ENCODE measurements at regions of chr18 and their contacts with region 1.

Region 1: DNA sequence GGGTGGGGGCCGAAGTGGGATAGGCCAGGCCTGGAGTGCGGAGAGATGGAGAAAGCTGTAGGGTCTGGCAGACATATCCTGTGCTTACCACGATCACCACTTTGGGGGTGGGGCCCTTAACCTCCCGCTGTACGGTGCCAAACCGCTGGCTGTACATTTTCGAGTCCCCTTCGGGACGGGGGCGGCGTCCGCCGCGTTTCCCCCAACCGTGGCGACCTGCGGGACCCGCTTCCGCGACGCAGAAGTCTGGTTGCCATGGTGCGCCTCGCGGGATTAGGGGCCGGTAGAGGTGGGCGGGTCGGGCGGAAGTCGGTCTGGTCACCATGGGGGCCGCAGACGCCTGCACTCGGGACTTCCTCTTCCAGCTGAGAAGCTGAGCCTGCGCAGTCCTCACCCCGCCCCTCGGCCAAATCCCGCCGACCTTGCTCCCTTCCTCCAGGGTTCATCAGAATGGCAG is at the start of gene CFAP53:
- DNase-seq: peak; percentile 94
- ATAC-seq: peak; percentile 86
- H3K4me3 Mint-ChIP-seq: peak within 1 kb of the TSS; percentile 76
- H3K27ac Mint-ChIP-seq: peak within 1 kb of the TSS; percentile 76
- H3K4me1 Mint-ChIP-seq: peaks cover 34% of the 10 kb centered on the region
- H3K27me3 Mint-ChIP-seq: no peaks in the 10 kb centered on the region
- total RNA-seq, gene CFAP53: 0.21 to 0.29 TPM

Region 2: DNA sequence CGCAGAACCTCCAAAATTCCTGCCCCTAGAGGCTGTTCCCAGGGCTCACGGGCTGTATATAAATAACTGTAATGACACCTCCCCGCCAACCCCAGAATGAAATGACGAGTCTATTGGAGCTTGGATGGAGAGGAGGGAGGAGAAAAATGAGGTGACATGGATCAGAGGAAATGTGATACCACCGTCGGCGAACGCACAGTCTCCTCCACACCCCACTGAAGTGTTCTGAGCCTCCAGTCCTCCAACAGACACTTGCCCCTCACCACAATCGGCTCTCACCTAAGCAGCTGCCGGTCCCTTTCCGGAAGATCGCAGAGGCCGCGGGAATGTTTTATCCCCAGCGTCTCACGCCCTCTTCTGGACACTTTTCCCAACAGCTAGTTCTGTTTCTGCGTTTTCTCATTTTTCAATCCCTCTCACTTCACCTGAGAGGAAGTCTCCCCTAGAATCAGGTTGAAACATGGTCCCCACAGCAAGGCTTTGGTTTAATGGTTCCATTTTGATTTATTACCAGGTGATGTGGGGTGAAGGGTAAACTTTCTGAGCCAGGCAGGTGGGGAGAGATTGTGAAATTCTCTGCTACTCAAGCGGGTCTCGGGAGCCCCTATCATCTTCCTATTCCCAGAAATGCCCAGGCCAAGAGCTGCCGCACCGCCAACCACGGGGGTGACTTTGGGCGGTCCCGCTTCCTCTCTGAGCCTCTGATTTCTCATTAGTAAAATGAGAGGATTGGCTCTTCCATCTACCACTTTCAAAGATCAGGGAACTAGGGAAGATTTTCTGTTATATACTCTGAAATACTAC is 62.3 kb before region 1 on chr18:
- CTCF ChIA-PET with region 1: no interaction called
- POLR2A ChIA-PET with region 1: no interaction called
- DNase-seq: peak; percentile 32
- ATAC-seq: no peak
- H3K4me3 Mint-ChIP-seq: no peak overlapping the region
- H3K27ac Mint-ChIP-seq: no peak overlapping the region
- H3K4me1 Mint-ChIP-seq: peaks cover 9% of the 10 kb centered on the region
- H3K27me3 Mint-ChIP-seq: peaks cover 58% of the 10 kb centered on the region

Region 3: DNA sequence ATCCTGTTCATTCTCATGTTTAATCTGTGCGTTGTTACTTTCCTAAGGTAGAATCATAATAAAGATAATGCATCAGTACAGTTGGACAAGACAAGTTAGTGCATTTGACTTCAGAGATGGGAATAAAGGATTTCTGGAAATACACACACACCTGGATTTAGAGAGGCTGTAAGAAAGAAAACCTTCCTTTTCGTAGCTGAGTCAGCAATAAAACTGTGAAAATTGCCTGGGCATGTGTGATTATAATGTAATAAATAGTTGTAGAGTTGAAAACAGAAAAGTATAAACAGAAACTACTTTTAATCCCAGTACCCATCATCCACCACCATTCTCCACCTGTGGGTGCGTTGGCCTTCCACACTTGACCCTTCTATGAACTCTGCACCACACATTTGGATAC is 15.3 kb before region 1 on chr18:
- CTCF ChIA-PET with region 1: no interaction called
- POLR2A ChIA-PET with region 1: no interaction called
- DNase-seq: no peak
- ATAC-seq: no peak
- H3K4me3 Mint-ChIP-seq: no peak overlapping the region
- H3K27ac Mint-ChIP-seq: no peak overlapping the region
- H3K4me1 Mint-ChIP-seq: peaks cover 3% of the 10 kb centered on the region
- H3K27me3 Mint-ChIP-seq: no peaks in the 10 kb centered on the region

Region 4: GRCh38 chr18:50281295-50281971 is 15.2 kb after region 1 on chr18 and contains the start of gene MBD1:
- CTCF ChIA-PET with region 1: interaction called, 50 read pairs
- POLR2A ChIA-PET with region 1: interaction called, 11 read pairs
- DNase-seq: peak; percentile 97
- ATAC-seq: peak; percentile 95
- H3K4me3 Mint-ChIP-seq: peak within 1 kb of the TSS; percentile 96
- H3K27ac Mint-ChIP-seq: peak within 1 kb of the TSS; percentile 94
- H3K4me1 Mint-ChIP-seq: peaks cover 64% of the 10 kb centered on the region
- H3K27me3 Mint-ChIP-seq: no peaks in the 10 kb centered on the region
- total RNA-seq, gene MBD1: 97.3 to 101 TPM

Region 5: DNA sequence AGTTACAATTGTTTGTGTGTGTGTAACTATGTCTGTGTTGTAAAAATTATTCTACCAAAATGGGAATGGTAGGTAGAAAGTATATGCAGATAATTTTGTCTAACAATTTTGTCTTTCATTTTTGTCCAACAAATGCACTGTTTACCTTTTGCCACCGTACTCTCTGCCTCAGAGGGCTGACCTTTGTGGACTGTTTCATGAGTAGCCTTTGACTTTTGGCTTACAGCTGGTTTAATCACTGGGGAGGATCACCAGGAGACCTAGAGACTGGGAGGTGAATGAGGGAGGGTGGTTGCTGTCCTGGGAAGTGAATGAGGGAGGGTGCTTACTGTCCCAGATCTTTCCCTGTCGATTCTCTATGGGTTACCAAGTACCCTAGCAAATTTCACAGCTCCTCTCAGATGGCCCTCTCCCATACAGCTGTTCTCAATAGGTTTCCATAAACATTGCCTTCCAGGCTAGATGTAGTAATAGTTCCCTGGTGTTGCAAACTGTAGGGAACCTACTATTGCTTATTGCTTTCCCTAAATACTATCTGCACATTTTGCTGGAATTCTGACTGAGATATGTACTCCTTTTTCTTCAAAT is 47.7 kb after region 1 on chr18:
- CTCF ChIA-PET with region 1: no interaction called
- POLR2A ChIA-PET with region 1: no interaction called
- DNase-seq: no peak
- ATAC-seq: no peak
- H3K4me3 Mint-ChIP-seq: no peak overlapping the region
- H3K27ac Mint-ChIP-seq: no peak overlapping the region
- H3K4me1 Mint-ChIP-seq: peaks cover 8% of the 10 kb centered on the region
- H3K27me3 Mint-ChIP-seq: peaks cover 16% of the 10 kb centered on the region

Measured in activated CD8-positive, alpha-beta T cell treated with anti-CD3 and anti-CD28 coated beads, Interleukin-2, amount 10 ng/mL, durations not matched to agents 7 days and 5 days (primary cell).